Naive thymus-derived CD4-positive, alpha-beta T cell (primary cell): ENCODE measurements at regions of chr17 and their contacts with region 1.

Region 1: DNA sequence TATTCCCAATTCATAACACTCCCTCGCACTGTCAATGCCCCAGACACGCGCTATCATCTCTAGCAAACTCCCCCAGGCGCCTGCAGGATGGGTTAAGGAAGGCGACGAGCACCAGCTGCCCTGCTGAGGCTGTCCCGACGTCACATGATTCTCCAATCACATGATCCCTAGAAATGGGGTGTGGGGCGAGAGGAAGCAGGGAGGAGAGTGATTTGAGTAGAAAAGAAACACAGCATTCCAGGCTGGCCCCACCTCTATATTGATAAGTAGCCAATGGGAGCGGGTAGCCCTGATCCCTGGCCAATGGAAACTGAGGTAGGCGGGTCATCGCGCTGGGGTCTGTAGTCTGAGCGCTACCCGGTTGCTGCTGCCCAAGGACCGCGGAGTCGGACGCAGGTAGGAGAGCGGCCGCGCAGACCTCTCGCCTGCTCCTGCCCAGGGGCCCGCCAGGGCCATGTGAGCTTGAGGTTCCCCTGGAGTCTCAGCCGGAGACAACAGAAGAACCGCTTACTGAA is at the start of gene GRN:
- DNase-seq: peak; percentile 67 to 85 (median 81)
- ATAC-seq: peak; percentile 96
- H3K4me3 ChIP-seq: peak within 1 kb of the TSS; percentile 88
- H3K4me3 Mint-ChIP-seq: peak within 1 kb of the TSS; percentile 88 to 96 (median 93)
- H3K27ac ChIP-seq: peak within 1 kb of the TSS; percentile 71
- H3K27ac Mint-ChIP-seq: peak within 1 kb of the TSS; percentile 42 to 88 (median 79)
- H3K4me1 ChIP-seq: peaks cover 6% of the 10 kb centered on the region in 2 donors
- H3K4me1 Mint-ChIP-seq: peaks cover 8 to 28% (median 19%) of the 10 kb centered on the region in 7 donors
- H3K27me3 ChIP-seq: no peaks in the 10 kb centered on the region
- H3K27me3 Mint-ChIP-seq: peaks cover 0 to 21% (median 7%) of the 10 kb centered on the region in 5 donors
- total RNA-seq, gene GRN: 49.5 to 374 (median 52.2) TPM

Region 2: DNA sequence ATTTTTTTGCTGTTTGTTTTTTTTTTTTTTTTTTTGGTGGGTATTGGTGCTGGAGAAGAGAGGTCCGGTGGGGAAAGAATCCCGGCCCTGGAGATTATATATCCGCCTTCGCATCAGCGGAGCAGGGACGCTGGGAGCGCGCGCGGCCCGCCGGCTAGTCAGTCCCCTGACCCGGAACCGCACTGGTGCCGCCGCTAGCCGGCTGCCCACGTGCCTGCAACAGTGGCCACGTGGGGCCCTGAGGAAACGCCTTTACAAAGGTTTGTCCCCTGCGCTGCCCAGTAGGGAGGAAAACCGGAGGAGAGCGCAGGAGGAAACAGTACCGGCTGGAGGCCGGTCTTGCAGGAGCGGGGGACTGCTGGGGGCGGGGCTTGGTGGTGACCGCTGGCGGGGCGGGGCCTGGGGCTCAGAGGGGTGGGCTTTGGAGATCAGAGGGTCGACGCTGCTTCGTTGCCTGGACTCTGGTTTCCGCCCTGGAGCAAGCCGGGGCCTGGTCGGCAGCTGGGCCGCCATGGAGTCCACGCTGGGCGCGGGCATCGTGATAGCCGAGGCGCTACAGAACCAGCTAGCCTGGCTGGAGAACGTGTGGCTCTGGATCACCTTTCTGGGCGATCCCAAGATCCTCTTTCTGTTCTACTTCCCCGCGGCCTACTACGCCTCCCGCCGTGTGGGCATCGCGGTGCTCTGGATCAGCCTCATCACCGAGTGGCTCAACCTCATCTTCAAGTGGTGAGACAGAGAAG is 274.4 kb before region 1 on chr17 and contains the start of gene G6PC3:
- CTCF ChIA-PET with region 1: no interaction called
- POLR2A ChIA-PET with region 1: no interaction called
- intact Hi-C with region 1: loop called in 1 of 2 experiments (anchors 5 kb)
- DNase-seq: peak; percentile 35 to 86 (median 49)
- ATAC-seq: peak; percentile 67
- H3K4me3 ChIP-seq: peak within 1 kb of the TSS; percentile 75
- H3K4me3 Mint-ChIP-seq: peak within 1 kb of the TSS; percentile 91 to 97 (median 94)
- H3K27ac ChIP-seq: peak within 1 kb of the TSS; percentile 83
- H3K27ac Mint-ChIP-seq: peak within 1 kb of the TSS; percentile 29 to 96 (median 93)
- H3K4me1 ChIP-seq: peaks cover 21 to 24% of the 10 kb centered on the region in 2 donors
- H3K4me1 Mint-ChIP-seq: peaks cover 31 to 49% (median 36%) of the 10 kb centered on the region in 7 donors
- H3K27me3 ChIP-seq: no peaks in the 10 kb centered on the region
- H3K27me3 Mint-ChIP-seq: no peaks in the 10 kb centered on the region
- total RNA-seq, gene G6PC3: 9.4 to 25.8 (median 13.9) TPM

Region 3: GRCh38 chr17:44199553-44200477 is 145.2 kb before region 1 on chr17 and contains the start of gene ATXN7L3:
- CTCF ChIA-PET with region 1: interaction called, 4 read pairs
- POLR2A ChIA-PET with region 1: interaction called, 4 read pairs
- intact Hi-C with region 1: loop called in 1 of 2 experiments (anchors 1 kb)
- DNase-seq: peak; percentile 90 to 99 (median 98)
- ATAC-seq: peak; percentile 91
- H3K4me3 ChIP-seq: peak within 1 kb of the TSS; percentile 68
- H3K4me3 Mint-ChIP-seq: peak within 1 kb of the TSS; percentile 90 to 97 (median 92)
- H3K27ac ChIP-seq: peak within 1 kb of the TSS; percentile 93
- H3K27ac Mint-ChIP-seq: peak within 1 kb of the TSS; percentile 91 to 97 (median 96)
- H3K4me1 ChIP-seq: peaks cover 27 to 34% of the 10 kb centered on the region in 2 donors
- H3K4me1 Mint-ChIP-seq: peaks cover 39 to 61% (median 53%) of the 10 kb centered on the region in 7 donors
- H3K27me3 ChIP-seq: no peaks in the 10 kb centered on the region
- H3K27me3 Mint-ChIP-seq: no peaks in the 10 kb centered on the region
- total RNA-seq, gene ATXN7L3: 93.5 to 130 (median 124) TPM

Region 4: DNA sequence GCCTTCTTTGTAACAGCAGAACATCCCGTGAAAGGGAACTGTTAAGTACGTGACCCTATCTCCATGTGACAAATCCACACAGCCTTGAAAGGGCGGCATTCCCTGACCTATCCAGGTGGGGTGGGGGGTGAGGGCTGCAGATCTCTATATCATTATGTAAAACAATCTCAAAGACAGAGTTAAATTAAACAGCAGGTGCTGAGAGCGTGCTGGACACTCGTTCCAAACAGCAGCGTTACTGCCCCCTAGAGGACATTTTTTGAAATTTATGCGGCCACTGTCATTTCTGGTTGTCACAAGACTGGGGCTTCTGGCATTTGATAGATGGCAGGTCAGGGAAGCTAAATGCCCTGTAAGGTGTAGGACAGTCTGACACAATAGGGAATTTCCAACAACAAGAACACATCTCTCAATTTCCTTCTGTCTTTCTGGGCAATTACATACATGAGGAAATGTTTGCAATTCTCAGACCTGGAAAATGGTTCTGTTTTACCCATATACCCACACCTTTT is 13.7 kb before region 1 on chr17:
- CTCF ChIA-PET with region 1: interaction called, 4 read pairs
- POLR2A ChIA-PET with region 1: interaction called, 5 read pairs
- intact Hi-C with region 1: loop called (anchors 1 kb)
- DNase-seq: peak in 8 of 9 donors; percentile 62 to 79 (median 71)
- ATAC-seq: peak; percentile 46
- H3K4me3 ChIP-seq: no peak overlapping the region
- H3K4me3 Mint-ChIP-seq: peak overlapping the region in 1 of 10 donors; percentile 24
- H3K27ac ChIP-seq: no peak overlapping the region
- H3K27ac Mint-ChIP-seq: peak overlapping the region in 3 of 9 donors; percentile 19 to 67 (median 43)
- H3K4me1 ChIP-seq: peaks cover 4 to 10% of the 10 kb centered on the region in 2 donors
- H3K4me1 Mint-ChIP-seq: peaks cover 0 to 18% (median 14%) of the 10 kb centered on the region in 7 donors
- H3K27me3 ChIP-seq: no peaks in the 10 kb centered on the region
- H3K27me3 Mint-ChIP-seq: peaks cover 0 to 2% (median 0%) of the 10 kb centered on the region in 5 donors

Region 5: DNA sequence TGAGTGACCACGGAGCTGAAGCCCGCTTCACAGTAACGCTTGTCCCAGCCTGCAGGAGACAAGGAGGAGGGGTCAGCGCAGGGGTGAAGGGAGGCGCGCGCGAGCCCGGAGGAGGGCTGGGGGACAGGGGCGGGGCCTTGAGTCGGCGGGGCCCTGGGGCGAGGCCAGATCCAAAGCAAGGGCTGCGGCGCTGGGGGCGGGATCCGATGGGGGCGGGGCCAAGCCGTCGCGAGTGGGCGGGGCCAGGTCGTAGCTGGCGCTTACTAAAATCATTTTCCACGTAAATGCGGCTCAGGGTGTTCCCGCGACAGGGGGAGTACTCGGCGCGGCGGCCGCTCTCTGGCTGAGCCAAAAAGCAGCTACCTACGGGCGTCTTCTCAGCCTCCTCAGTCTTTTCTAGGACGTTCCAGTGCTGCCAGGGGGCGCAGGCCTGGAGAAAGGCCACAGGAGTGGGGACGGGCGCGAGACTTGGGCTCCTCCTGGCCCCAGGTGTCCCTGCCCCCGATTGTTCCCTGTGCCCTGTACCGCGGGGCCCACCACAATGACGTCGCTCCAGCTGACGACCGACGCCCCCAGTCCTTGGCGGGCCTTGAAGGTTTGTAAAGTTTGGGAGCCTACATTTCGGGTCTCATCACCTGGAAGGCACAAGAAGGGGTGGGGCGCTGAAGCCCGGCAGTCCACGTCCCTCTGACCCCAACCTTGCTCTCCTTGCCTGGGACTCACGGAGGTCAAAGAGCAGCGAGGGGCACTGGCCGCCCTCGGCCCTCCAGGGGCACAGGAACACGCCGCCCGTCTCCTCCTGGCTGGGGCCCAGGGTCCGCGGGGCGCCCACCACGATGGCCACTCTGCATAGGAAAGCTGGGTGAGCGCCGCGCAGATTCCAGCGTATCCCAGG is 40.5 kb after region 1 on chr17:
- CTCF ChIA-PET with region 1: no interaction called
- POLR2A ChIA-PET with region 1: no interaction called
- intact Hi-C with region 1: loop called (anchors 1 to 2 kb)
- DNase-seq: peak; percentile 66 to 91 (median 78)
- ATAC-seq: peak; percentile 92
- H3K4me3 ChIP-seq: peak overlapping the region; percentile 66
- H3K4me3 Mint-ChIP-seq: peak overlapping the region; percentile 71 to 83 (median 79)
- H3K27ac ChIP-seq: peak overlapping the region; percentile 24
- H3K27ac Mint-ChIP-seq: peak overlapping the region in 2 of 9 donors; percentile 17 to 46
- H3K4me1 ChIP-seq: peaks cover 4 to 7% of the 10 kb centered on the region in 2 donors
- H3K4me1 Mint-ChIP-seq: peaks cover 5 to 19% (median 12%) of the 10 kb centered on the region in 7 donors
- H3K27me3 ChIP-seq: no peaks in the 10 kb centered on the region
- H3K27me3 Mint-ChIP-seq: peaks cover 4 to 31% (median 15%) of the 10 kb centered on the region in 5 donors

Region 6: GRCh38 chr17:44409314-44410028 is 64.5 kb after region 1 on chr17:
- CTCF ChIA-PET with region 1: no interaction called
- POLR2A ChIA-PET with region 1: no interaction called
- intact Hi-C with region 1: no loop called
- DNase-seq: no peak
- ATAC-seq: no peak
- H3K4me3 ChIP-seq: no peak overlapping the region
- H3K4me3 Mint-ChIP-seq: no peak overlapping the region
- H3K27ac ChIP-seq: no peak overlapping the region
- H3K27ac Mint-ChIP-seq: no peak overlapping the region
- H3K4me1 ChIP-seq: no peaks in the 10 kb centered on the region
- H3K4me1 Mint-ChIP-seq: peaks cover 0 to 6% (median 0%) of the 10 kb centered on the region in 7 donors
- H3K27me3 ChIP-seq: no peaks in the 10 kb centered on the region
- H3K27me3 Mint-ChIP-seq: no peaks in the 10 kb centered on the region

Region 7: DNA sequence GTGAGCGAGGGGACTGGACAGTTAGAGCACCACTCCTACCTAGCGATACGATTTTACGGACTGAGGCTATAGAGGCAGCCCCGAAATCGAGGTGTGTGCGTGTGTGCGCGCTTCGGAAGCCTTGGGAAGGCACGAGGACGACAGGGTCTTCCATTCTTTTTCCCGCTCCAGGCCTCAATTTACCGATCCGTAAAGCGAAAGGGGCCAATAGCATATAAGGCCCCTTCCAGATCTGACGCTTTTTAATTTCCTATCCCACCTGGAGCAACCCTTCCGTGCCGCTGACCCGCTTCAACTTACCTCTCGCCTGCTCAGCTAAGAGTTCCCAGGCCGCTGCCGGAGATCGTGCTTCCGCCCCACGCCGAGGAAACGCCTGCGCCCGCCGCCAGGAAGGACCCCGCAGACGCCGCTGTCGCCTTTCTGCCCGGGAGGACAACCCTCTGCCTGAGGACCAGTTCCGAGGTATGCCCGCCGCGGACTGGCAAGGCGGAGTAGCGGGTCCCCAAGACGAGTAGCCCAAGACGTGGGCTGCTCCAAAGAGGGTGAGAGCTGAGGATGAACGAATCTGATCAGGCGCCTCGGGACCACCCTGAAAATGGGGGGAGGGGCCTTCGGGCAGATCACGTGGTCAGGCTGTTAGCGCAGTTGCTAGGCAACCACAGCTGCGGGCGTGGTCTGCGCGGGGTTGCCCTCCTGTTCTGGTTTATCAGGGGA is 554.2 kb after region 1 on chr17 and contains the start of gene EFTUD2:
- CTCF ChIA-PET with region 1: no interaction called
- POLR2A ChIA-PET with region 1: no interaction called
- intact Hi-C with region 1: no loop called
- DNase-seq: peak; percentile 91 to 99 (median 96)
- ATAC-seq: peak; percentile 94
- H3K4me3 ChIP-seq: peak within 1 kb of the TSS; percentile 89
- H3K4me3 Mint-ChIP-seq: peak within 1 kb of the TSS; percentile 84 to 97 (median 96)
- H3K27ac ChIP-seq: peak within 1 kb of the TSS; percentile 96
- H3K27ac Mint-ChIP-seq: peak within 1 kb of the TSS; percentile 99 to 100 (median 99)
- H3K4me1 ChIP-seq: peaks cover 6 to 10% of the 10 kb centered on the region in 2 donors
- H3K4me1 Mint-ChIP-seq: peaks cover 26 to 41% (median 35%) of the 10 kb centered on the region in 7 donors
- H3K27me3 ChIP-seq: no peaks in the 10 kb centered on the region
- H3K27me3 Mint-ChIP-seq: peaks cover 0 to 23% (median 0%) of the 10 kb centered on the region in 5 donors
- total RNA-seq, gene EFTUD2: 94.3 to 157 (median 120) TPM